Mammary epithelial cell (primary cell): ENCODE measurements at regions of chr7 and their contacts with region 1.

Region 1: GRCh38 chr7:80018941-80019752 is 115.5 kb upstream of the GNAI1 start:
- DNase-seq: peak; percentile 13
- H3K4me3 ChIP-seq: no peak overlapping the region
- H3K27ac ChIP-seq: no peak overlapping the region
- H3K4me1 ChIP-seq: no peaks in the 10 kb centered on the region
- H3K27me3 ChIP-seq: no peaks in the 10 kb centered on the region
- CTCF ChIP-seq: peak; percentile 70 to 90

Region 2: DNA sequence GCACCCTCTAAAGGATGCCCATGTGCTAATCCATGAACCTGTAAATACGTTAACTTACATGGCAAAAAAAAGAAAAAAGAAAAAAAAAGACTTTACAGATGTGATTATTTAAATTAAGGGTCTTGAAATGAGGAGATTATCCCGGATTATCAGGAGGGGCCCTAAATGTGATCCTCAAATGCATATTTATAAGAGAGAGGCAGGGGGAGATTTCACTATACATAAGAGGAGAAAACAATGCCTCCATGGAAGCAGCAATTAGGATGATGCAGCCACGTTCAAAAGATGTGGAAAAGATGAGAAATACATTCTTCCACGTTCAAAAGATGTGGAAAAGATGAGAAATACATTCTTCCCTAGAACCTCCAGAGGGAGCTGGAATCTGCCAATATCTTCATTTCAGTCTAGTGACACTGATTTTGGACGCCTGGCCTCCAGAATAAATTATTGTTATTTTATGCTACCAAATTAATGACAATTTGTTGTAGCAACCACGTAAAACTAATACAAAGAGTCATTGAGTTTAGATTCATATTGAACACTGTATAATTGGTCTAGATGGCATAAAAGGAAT is 212.9 kb before region 1 on chr7:
- CTCF ChIA-PET with region 1: no interaction called
- dilution Hi-C with region 1: no loop called
- in situ Hi-C with region 1: loop called (anchors 10 to 25 kb)
- intact Hi-C with region 1: loop called (anchors 1 kb)
- DNase-seq: peak; percentile 8
- H3K4me3 ChIP-seq: no peak overlapping the region
- H3K27ac ChIP-seq: no peak overlapping the region
- H3K4me1 ChIP-seq: no peaks in the 10 kb centered on the region
- H3K27me3 ChIP-seq: peaks cover 2% of the 10 kb centered on the region
- CTCF ChIP-seq: peak; percentile 29 to 47

Region 3: DNA sequence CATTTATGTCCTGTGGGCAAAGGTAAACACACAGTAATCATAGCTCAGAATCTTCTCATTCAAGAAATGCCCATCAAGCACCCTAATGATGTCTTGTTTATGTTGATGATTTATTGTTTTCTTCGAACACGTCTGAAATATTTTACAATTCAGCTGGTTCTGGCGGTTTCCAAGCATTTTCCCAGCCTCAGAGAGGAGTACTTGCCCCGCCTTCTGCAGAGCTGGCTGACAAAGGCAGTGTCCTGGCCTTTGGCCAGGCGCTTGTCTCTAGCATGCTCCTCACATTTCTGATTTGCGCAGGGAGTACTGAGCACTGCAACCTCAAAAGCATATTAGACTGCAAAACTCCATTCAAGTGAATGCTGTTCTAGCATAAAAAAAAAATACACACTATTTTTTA is 198.8 kb before region 1 on chr7:
- CTCF ChIA-PET with region 1: no interaction called
- dilution Hi-C with region 1: no loop called
- in situ Hi-C with region 1: loop called in 1 of 2 experiments (anchors 25 kb)
- intact Hi-C with region 1: no loop called
- DNase-seq: peak; percentile 1
- H3K4me3 ChIP-seq: no peak overlapping the region
- H3K27ac ChIP-seq: no peak overlapping the region
- H3K4me1 ChIP-seq: no peaks in the 10 kb centered on the region
- H3K27me3 ChIP-seq: peaks cover 5% of the 10 kb centered on the region
- CTCF ChIP-seq: no peak